ENCODE measurements at regions of chr12 and their contacts with region 1.

Region 1: GRCh38 chr12:57124259-57124877 is 3.9 kb upstream of the LRP1 start:
- DNase-seq: peak; percentile 72 to 87 (median 82)
- H3K4me3 ChIP-seq: no peak overlapping the region
- H3K27ac ChIP-seq: no peak overlapping the region
- H3K4me1 ChIP-seq: peaks cover 0 to 21% (median 18%) of the 10 kb centered on the region in 4 experiments
- H3K27me3 ChIP-seq: peaks cover 0 to 35% (median 11%) of the 10 kb centered on the region in 5 experiments

Region 2: DNA sequence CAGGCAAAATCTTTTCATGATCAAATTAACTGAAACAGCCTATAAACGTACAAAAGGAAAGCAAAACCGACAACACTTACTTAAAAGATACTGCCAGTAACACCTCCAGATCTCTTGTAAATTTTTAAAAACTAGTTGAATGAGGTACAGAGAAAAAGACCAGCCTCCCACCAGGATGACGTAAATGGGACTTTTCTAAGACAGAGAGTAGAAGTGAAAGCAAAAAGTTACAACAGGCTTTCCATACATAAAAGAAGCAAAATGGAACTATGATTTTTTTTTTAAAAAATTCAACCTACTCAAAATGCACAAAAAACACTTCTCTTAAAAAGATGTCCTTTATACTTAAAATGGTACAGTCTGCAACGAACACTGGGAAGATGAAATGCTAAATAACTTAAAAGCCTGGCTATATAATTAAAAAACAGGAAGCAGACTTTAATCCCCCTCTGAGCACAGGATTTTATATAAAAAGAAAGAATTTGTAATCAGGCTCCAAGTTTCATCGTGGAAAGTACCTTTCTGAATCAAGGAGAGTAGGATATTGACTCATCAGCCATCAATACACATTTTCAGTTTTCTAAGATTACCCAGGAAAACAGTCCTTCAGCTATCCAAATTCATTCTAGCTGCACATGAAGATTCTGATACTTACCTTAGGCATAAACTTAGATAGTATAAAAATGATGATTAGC is 60.2 kb before region 1 on chr12:
- CTCF ChIA-PET with region 1: interaction called, 19 read pairs
- POLR2A ChIA-PET with region 1: no interaction called
- DNase-seq: peak in 2 of 3 donors; percentile 56 to 74
- H3K4me3 ChIP-seq: peak overlapping the region in 1 of 7 experiments; percentile 34
- H3K27ac ChIP-seq: peak overlapping the region; percentile 27 to 29
- H3K4me1 ChIP-seq: peaks cover 0 to 9% (median 0%) of the 10 kb centered on the region in 4 experiments
- H3K27me3 ChIP-seq: no peaks in the 10 kb centered on the region

Region 3: DNA sequence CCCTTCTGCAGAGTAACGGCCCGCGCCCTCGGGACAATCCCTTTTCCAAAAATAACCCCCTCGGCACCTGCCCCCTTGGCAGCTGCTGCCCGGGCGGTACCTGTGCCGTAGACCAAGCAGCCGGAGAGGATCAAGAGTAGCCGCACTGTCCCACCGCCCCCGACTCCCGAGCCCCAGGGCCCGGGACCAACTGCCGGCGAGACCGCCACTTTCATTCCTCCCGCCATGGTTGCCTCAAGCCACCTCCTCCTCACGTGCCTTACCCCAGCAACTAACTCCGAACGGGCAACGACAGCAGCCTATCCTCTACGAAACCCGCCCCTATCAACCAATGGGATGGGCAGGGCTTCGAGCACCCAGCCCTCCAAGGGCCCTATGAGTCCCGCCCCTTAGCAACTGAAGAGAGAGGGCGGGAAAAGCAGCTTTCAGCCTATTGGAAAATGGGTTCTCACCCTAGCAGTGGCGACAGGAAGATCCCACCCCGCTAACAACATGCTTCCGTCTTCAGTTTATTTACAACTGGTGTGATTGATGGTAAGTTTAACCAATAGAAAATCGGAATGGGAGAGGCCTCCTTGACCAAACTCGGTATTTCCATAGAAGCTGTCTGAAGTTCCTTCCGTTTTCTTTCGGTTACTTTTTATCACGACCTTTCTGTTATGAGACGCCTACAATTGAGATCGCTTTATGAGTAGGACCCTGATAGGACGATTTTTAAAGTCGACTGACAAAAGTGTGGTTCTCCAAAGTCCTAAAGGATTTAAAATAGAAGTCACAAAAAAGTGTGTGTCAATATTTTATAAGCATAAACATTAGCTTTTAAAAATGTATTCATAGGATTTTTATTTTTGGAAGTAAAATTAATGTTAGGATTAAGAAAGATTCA is 45.6 kb before region 1 on chr12 and contains the start of gene NEMP1:
- CTCF ChIA-PET with region 1: interaction called, 25 read pairs
- POLR2A ChIA-PET with region 1: no interaction called
- DNase-seq: peak; percentile 100
- H3K4me3 ChIP-seq: peak within 1 kb of the TSS; percentile 41 to 96 (median 92)
- H3K27ac ChIP-seq: peak within 1 kb of the TSS; percentile 70 to 90
- H3K4me1 ChIP-seq: peaks cover 7 to 27% (median 22%) of the 10 kb centered on the region in 4 experiments
- H3K27me3 ChIP-seq: no peaks in the 10 kb centered on the region

Region 4: DNA sequence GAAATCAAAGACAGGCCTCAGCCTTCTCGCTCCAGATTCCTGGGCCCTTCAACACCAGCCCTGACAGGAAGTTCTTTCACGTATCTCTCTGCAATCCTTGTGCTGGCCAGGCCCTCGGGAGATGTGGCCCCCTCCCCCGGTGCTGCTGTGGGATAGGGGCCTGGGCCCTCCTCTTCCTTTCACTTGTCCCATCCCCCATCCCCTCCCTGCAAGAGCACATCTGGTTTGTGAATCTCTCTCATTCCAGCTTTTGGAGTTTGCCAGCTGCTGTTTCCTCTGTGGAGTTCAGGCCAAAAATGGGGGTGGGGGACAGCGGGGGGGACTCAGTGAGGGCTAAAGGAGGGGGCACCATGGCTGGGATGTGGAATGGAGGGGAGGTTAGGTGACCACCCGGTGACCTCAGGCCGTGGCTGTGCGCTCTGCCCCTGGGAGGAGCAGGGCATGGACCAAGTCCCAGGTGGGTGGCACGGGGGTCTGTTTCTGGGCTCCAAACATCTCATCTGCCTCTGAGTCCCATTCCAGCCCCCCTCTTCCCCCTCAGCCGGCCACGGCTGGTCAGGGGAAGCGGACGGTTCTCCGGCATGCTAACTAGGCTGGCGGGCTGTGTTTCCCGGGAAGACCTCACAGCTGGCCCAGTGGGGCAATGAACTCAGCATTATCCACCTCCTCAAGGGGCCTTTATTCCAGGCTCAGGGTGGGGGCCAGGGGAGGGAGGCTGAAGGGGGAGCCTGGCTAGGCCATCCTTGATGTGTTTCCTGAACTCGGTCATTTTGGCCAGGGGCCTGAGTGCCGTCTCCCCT is 11.4 kb after region 1 on chr12:
- CTCF ChIA-PET with region 1: interaction called, 36 read pairs
- POLR2A ChIA-PET with region 1: no interaction called
- DNase-seq: no peak
- H3K4me3 ChIP-seq: no peak overlapping the region
- H3K27ac ChIP-seq: no peak overlapping the region
- H3K4me1 ChIP-seq: no peaks in the 10 kb centered on the region
- H3K27me3 ChIP-seq: peaks cover 0 to 8% (median 0%) of the 10 kb centered on the region in 5 experiments

Region 5: GRCh38 chr12:57157588-57158173 is 33.3 kb after region 1 on chr12:
- CTCF ChIA-PET with region 1: interaction called, 30 read pairs
- POLR2A ChIA-PET with region 1: interaction called, 3 read pairs
- DNase-seq: peak; percentile 49 to 90 (median 90)
- H3K4me3 ChIP-seq: no peak overlapping the region
- H3K27ac ChIP-seq: no peak overlapping the region
- H3K4me1 ChIP-seq: peaks cover 2 to 58% (median 19%) of the 10 kb centered on the region in 4 experiments
- H3K27me3 ChIP-seq: no peaks in the 10 kb centered on the region

Region 6: GRCh38 chr12:57182921-57183790 is 58.8 kb after region 1 on chr12:
- CTCF ChIA-PET with region 1: interaction called, 350 read pairs
- POLR2A ChIA-PET with region 1: no interaction called
- DNase-seq: peak; percentile 49 to 75 (median 63)
- H3K4me3 ChIP-seq: no peak overlapping the region
- H3K27ac ChIP-seq: no peak overlapping the region
- H3K4me1 ChIP-seq: no peaks in the 10 kb centered on the region
- H3K27me3 ChIP-seq: peaks cover 0 to 3% (median 0%) of the 10 kb centered on the region in 5 experiments

Region 7: DNA sequence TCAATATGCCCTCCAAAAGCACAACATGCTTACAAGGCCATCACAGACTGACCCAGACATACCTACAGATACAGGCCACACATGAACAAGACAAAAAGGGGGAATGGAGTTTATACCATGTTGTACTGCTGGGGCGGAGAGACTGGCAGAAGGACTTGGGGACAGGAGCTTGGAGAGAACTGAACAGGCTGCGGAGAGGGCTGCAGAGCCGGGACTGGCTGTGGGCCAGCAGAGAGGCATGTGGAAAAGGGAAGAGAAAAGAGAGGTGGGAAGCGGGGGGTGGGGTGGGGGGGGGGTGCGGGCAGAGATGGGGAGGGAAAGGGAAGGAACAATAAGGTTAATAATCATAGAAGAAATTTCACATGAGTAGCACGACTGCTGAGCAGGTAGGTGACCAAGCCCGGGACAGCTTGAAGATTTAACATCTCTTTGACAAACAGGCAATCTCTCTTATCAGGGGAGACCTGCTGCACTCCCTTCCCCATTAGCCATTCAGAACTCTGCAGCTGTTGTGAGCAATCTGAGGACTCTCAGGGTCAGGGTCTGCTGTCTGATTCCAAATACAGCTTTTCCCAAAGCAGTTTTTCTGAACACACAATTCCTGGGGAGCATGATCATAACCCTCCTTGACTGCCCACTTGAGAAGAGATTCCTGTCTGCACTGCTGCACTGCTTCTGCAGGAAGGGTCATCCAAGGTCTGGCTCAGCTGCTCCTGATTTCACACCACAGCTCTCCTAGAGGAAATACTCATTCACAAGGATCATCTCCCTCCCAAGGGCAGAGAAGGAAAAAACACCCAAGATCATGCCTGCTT is 148.2 kb after region 1 on chr12:
- CTCF ChIA-PET with region 1: no interaction called
- POLR2A ChIA-PET with region 1: no interaction called
- DNase-seq: no peak
- H3K4me3 ChIP-seq: no peak overlapping the region
- H3K27ac ChIP-seq: no peak overlapping the region
- H3K4me1 ChIP-seq: peaks cover 0 to 12% (median 6%) of the 10 kb centered on the region in 4 experiments
- H3K27me3 ChIP-seq: no peaks in the 10 kb centered on the region

Region 8: GRCh38 chr12:57452937-57453509 is 328.7 kb after region 1 on chr12:
- CTCF ChIA-PET with region 1: no interaction called
- POLR2A ChIA-PET with region 1: no interaction called
- DNase-seq: peak; percentile 50 to 73 (median 57)
- H3K4me3 ChIP-seq: no peak overlapping the region
- H3K27ac ChIP-seq: no peak overlapping the region
- H3K4me1 ChIP-seq: peaks cover 0 to 18% (median 6%) of the 10 kb centered on the region in 4 experiments
- H3K27me3 ChIP-seq: no peaks in the 10 kb centered on the region